ENCODE measurements at regions of chr4 and their contacts with region 1.

Region 1: DNA sequence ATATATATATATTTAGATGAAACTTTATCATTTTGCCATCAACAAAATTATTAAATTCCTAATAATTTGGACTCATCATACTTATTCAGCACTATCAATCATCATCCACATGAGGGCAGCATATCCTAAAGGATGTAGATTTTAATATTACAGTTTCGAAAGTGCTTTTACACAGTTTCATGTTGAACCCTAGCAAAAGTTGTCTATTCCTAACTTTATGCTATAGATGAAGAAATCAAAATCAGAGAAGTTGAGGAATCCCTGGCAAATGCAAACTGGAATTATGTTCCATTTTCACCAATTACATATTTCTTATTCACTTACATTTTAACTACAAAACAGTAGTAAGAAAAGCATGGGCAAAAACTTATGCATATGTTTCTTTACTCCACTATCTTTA is 36.6 kb upstream of the UGT2A1 start:
- DNase-seq: peak; percentile 7
- ATAC-seq: no peak
- H3K4me3 ChIP-seq: no peak overlapping the region
- H3K27ac ChIP-seq: no peak overlapping the region
- H3K4me1 ChIP-seq: no peaks in the 10 kb centered on the region
- H3K27me3 ChIP-seq: no peaks in the 10 kb centered on the region
- CTCF ChIP-seq: peak; percentile 33; the same call in 1 of the 2 replicates

Region 2: GRCh38 chr4:68871809-68872642 is 817.6 kb before region 1 on chr4:
- CTCF ChIA-PET with region 1: no interaction called
- POLR2A ChIA-PET with region 1: no interaction called
- in situ Hi-C with region 1: no loop called
- intact Hi-C with region 1: no loop called
- DNase-seq: no peak
- ATAC-seq: no peak
- H3K4me3 ChIP-seq: no peak overlapping the region
- H3K27ac ChIP-seq: no peak overlapping the region
- H3K4me1 ChIP-seq: no peaks in the 10 kb centered on the region
- H3K27me3 ChIP-seq: no peaks in the 10 kb centered on the region
- CTCF ChIP-seq: no peak

Region 3: GRCh38 chr4:69881173-69881773 is 191.7 kb after region 1 on chr4:
- CTCF ChIA-PET with region 1: no interaction called
- POLR2A ChIA-PET with region 1: no interaction called
- in situ Hi-C with region 1: no loop called
- intact Hi-C with region 1: loop called (anchors 2 kb)
- DNase-seq: peak; percentile 18
- ATAC-seq: no peak
- H3K4me3 ChIP-seq: no peak overlapping the region
- H3K27ac ChIP-seq: no peak overlapping the region
- H3K4me1 ChIP-seq: no peaks in the 10 kb centered on the region
- H3K27me3 ChIP-seq: no peaks in the 10 kb centered on the region
- CTCF ChIP-seq: peak; percentile 69; the same call in 1 of the 2 replicates

Region 4: GRCh38 chr4:70511365-70511764 is 821.8 kb after region 1 on chr4:
- CTCF ChIA-PET with region 1: no interaction called
- POLR2A ChIA-PET with region 1: no interaction called
- in situ Hi-C with region 1: no loop called
- intact Hi-C with region 1: loop called (anchors 5 kb)
- DNase-seq: no peak
- ATAC-seq: no peak
- H3K4me3 ChIP-seq: no peak overlapping the region
- H3K27ac ChIP-seq: no peak overlapping the region
- H3K4me1 ChIP-seq: no peaks in the 10 kb centered on the region
- H3K27me3 ChIP-seq: no peaks in the 10 kb centered on the region
- CTCF ChIP-seq: no peak

Region 5: GRCh38 chr4:70559211-70559830 is 869.7 kb after region 1 on chr4:
- CTCF ChIA-PET with region 1: no interaction called
- POLR2A ChIA-PET with region 1: no interaction called
- in situ Hi-C with region 1: no loop called
- intact Hi-C with region 1: loop called (anchors 5 kb)
- DNase-seq: peak; percentile 24
- ATAC-seq: no peak; the same call in 1 of the 2 replicates
- H3K4me3 ChIP-seq: no peak overlapping the region
- H3K27ac ChIP-seq: no peak overlapping the region
- H3K4me1 ChIP-seq: no peaks in the 10 kb centered on the region
- H3K27me3 ChIP-seq: no peaks in the 10 kb centered on the region
- CTCF ChIP-seq: peak; percentile 68; the same call in 1 of the 2 replicates